ENCODE measurements at regions of chr6 and their contacts with region 1.

Region 1: GRCh38 chr6:128275030-128275429 is 245.4 kb downstream of the PTPRK start:
- DNase-seq: no peak
- H3K4me3 Mint-ChIP-seq: no peak overlapping the region
- H3K27ac Mint-ChIP-seq: no peak overlapping the region
- H3K4me1 Mint-ChIP-seq: peaks cover 7% of the 10 kb centered on the region
- H3K27me3 Mint-ChIP-seq: peaks cover under 1% of the 10 kb centered on the region

Region 2: GRCh38 chr6:128259730-128260685 is 15.0 kb before region 1 on chr6:
- intact Hi-C with region 1: loop called (anchors 2 kb)
- DNase-seq: no peak
- H3K4me3 Mint-ChIP-seq: peak overlapping the region; percentile 25
- H3K27ac Mint-ChIP-seq: no peak overlapping the region
- H3K4me1 Mint-ChIP-seq: peaks cover 30% of the 10 kb centered on the region
- H3K27me3 Mint-ChIP-seq: no peaks in the 10 kb centered on the region

Measured in activated T-helper 1 cell treated with anti-CD3 and anti-CD28 coated beads, Interleukin-12 subunit alpha, Interleukin-12 subunit beta, Interleukin-2, Interleukin-4 antibody, amounts not matched to agents 30 ng/mL and 10 ng/mL and 1 ng/mL, durations not matched to agents 14 hours and 24 hours and 36 hours (primary cell).